Common myeloid progenitor, CD34-positive (primary cell): ENCODE measurements at regions of chr22 and their contacts with region 1.

Region 1: DNA sequence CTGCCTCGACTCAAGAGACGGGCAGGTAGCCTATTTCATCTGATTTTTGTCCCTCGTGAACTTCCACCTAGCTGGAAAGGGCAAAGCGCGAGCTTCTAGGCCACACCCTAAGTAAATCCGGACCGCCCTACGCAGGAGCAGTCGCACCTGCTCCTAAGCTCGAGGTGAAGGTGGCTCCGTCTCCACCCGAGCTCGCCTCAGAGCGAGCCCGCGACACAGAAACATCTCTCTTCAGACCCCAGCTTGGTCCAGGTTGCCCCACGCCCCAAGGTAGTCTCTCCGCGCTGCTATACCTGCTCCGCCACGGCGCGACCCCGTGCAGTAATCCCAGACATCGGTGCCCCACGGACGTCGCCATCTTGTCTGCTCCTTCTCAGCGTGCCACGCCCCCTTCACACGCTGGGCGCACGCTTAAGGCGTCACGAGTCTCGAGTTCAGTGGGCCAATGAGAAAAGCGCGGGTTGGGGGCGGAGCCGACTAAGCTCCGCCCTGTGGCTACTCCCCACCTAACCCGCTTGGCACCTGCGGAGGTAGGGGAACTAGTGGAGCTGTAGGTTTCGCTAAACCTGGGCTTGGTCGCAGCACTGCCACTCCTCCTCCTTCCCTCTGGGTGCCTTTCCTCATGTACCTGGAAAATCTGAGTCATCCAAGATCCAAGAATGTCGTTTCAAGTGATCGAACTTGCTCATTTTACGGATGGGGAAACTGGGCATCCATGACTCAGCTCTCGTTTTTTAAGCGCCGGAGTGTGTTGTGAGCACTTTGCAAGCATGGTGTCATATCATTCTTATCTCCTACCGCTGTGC is at the start of gene PISD:
- DNase-seq: peak; percentile 96 to 98 (median 97)
- H3K4me3 ChIP-seq: peak within 1 kb of the TSS; percentile 85 to 100 (median 95)
- H3K27ac ChIP-seq: peak within 1 kb of the TSS; percentile 51 to 87
- H3K4me1 ChIP-seq: peaks cover 9 to 18% (median 14%) of the 10 kb centered on the region in 4 experiments
- H3K27me3 ChIP-seq: no peaks in the 10 kb centered on the region

Region 2: GRCh38 chr22:31623592-31624304 is 38.3 kb before region 1 on chr22:
- CTCF ChIA-PET with region 1: no interaction called
- POLR2A ChIA-PET with region 1: no interaction called
- DNase-seq: no peak
- H3K4me3 ChIP-seq: no peak overlapping the region
- H3K27ac ChIP-seq: no peak overlapping the region
- H3K4me1 ChIP-seq: peaks cover 0 to 25% (median 18%) of the 10 kb centered on the region in 4 experiments
- H3K27me3 ChIP-seq: no peaks in the 10 kb centered on the region

Region 3: DNA sequence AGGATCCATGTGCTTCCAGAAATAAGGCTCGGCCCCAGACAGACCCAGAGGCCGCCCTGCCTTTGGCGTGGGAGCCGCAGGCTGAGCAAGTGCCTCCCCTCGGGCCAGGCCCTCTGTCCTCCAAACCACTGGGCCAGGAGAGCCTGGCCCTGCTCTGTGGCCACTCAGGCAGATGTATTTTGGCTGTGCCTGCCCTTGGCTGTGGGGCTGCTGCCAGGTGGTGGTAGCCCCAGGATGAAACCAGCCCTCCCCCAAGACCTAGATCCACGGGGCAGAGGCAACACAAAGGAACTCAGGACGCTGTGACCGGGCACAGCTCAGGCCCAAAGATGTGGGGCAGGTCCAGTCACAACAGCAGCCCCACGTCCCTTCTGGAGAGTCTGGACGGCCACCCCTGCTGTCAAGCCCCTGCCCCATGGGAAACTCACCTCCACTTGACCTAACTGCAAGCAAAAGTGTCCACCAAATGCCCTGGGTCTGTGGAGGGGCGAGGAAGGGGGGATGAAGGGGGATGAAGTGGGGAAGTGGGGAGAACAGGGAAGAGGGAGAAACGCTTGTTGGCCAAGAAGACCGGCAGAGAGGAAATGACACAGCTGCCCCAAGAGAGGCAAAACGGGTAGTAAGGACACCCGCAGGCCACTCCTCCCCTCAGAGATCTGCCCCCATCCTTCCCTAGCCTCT is 24.0 kb before region 1 on chr22:
- CTCF ChIA-PET with region 1: interaction called, 14 read pairs
- POLR2A ChIA-PET with region 1: interaction called, 3 read pairs
- DNase-seq: peak; percentile 74 to 88 (median 83)
- H3K4me3 ChIP-seq: peak overlapping the region; percentile 20 to 80 (median 63)
- H3K27ac ChIP-seq: peak overlapping the region; percentile 75 to 87
- H3K4me1 ChIP-seq: peaks cover 4 to 50% (median 36%) of the 10 kb centered on the region in 4 experiments
- H3K27me3 ChIP-seq: no peaks in the 10 kb centered on the region

Region 4: DNA sequence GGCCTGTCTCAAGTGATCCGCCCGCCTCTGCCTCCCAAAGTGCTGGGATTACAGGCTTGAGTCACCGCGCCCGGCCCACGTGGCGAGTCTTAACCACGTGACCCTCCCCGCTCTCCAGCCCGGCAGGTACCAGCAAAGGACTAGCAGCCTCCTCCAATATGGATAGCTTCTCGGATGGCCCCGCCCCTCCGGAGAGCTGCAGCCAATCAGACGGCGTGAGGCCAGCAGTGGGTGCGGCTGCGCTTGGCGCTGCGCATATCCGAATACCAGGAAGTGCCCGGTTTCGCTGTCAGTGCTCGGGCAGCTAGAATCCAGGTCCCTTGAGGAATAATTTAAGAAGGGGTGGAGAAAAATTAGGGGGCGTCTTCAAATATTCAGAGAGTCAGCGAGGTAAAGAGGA is 14.6 kb after region 1 on chr22:
- CTCF ChIA-PET with region 1: interaction called, 19 read pairs
- POLR2A ChIA-PET with region 1: no interaction called
- DNase-seq: peak; percentile 92 to 94 (median 94)
- H3K4me3 ChIP-seq: peak overlapping the region; percentile 38 to 87 (median 70)
- H3K27ac ChIP-seq: peak overlapping the region in 1 of 2 experiments; percentile 61
- H3K4me1 ChIP-seq: peaks cover 0 to 10% (median 4%) of the 10 kb centered on the region in 4 experiments
- H3K27me3 ChIP-seq: no peaks in the 10 kb centered on the region

Region 5: DNA sequence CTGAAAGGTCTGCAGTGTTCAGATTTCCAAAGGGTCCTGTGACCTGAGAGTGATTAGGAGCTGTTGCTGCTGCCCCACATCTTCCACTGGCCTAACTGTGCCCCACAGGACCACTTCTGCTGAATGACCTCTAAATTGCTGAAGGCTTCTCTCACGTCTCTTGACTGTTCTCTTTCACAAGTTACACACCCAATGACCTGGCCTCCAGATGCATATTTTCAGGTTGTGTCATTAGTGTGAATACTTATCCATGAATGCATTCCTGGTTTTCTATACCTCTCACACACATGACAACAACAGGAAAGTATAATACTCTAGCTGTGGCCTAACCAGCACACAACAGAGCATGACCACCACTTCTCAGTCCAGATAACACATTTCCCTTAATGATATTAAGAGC is 72.5 kb after region 1 on chr22:
- CTCF ChIA-PET with region 1: no interaction called
- POLR2A ChIA-PET with region 1: no interaction called
- DNase-seq: no peak
- H3K4me3 ChIP-seq: no peak overlapping the region
- H3K27ac ChIP-seq: no peak overlapping the region
- H3K4me1 ChIP-seq: no peaks in the 10 kb centered on the region
- H3K27me3 ChIP-seq: no peaks in the 10 kb centered on the region

Region 6: GRCh38 chr22:31841078-31841827 is 179.2 kb after region 1 on chr22:
- CTCF ChIA-PET with region 1: no interaction called
- POLR2A ChIA-PET with region 1: no interaction called
- DNase-seq: no peak
- H3K4me3 ChIP-seq: no peak overlapping the region
- H3K27ac ChIP-seq: no peak overlapping the region
- H3K4me1 ChIP-seq: no peaks in the 10 kb centered on the region
- H3K27me3 ChIP-seq: no peaks in the 10 kb centered on the region